ENCODE measurements at regions of chr11 and their contacts with region 1.

Region 1: DNA sequence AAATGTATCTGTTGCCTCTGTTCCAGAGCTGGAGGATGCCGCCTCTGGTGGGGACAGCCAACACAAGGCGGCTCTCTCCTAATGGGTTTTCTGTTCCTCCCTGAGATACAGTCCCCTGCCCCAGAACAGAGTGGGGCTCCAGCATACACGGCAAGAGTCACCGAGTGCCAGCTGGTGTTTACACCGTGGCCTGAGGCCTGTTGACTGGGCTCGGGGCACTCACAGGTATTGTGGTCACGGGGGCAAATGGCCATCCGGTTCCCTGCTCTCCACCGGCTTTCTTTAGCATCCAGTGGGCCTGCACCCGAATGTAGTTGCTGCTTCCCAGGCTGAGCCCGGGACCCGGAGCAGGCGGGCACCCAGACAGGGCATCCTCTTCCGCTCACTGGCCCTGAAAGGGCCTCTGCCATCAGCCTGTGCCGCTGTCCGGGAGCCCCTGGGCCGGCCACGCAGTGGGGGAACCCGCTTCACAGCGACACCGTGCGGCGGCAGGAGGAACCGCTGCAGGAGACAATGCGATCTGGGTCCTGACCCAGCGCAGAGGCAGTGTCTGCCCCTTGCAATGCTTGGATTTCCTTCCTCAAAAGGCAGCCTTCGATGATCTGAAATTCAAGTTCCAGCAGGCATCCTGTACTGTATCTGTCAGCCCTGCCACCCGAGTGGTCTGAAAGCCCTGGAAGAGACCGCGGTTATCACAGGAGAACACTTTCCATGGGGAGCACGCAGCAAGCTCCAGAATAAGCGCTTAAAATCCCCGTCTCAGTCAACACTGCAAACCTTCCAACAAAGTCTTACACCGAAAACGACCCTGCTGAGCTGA is 859 bp upstream of the KRTAP5-5 start:
- DNase-seq: peak; percentile 66
- ATAC-seq: peak; percentile 90
- H3K4me3 Mint-ChIP-seq: no peak overlapping the region
- H3K27ac Mint-ChIP-seq: no peak overlapping the region
- H3K4me1 Mint-ChIP-seq: peaks cover 6% of the 10 kb centered on the region
- H3K27me3 Mint-ChIP-seq: peaks cover 28% of the 10 kb centered on the region

Region 2: DNA sequence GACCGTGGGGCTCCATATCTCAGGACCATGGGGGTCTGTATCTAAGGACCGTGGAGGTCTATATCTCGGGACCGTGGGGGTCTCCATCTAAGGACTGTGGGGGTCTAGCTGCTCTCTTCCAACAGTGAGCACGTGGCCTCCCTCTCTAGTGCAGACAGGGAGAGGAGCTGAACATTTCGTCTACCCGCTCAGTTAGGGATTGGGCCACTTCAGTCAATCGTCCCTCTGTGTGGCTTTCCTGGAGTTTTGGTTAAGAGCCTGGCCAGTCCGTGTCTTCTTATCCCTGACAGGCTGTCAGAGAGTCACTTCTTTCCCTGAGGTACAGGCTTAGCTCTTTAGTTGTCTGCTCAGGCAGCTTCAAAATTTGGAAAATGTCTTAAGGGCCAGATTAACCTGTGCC is 46.7 kb before region 1 on chr11:
- CTCF ChIA-PET with region 1: no interaction called
- DNase-seq: no peak
- ATAC-seq: no peak
- H3K4me3 Mint-ChIP-seq: no peak overlapping the region
- H3K27ac Mint-ChIP-seq: no peak overlapping the region
- H3K4me1 Mint-ChIP-seq: no peaks in the 10 kb centered on the region
- H3K27me3 Mint-ChIP-seq: peaks cover 10% of the 10 kb centered on the region

Region 3: DNA sequence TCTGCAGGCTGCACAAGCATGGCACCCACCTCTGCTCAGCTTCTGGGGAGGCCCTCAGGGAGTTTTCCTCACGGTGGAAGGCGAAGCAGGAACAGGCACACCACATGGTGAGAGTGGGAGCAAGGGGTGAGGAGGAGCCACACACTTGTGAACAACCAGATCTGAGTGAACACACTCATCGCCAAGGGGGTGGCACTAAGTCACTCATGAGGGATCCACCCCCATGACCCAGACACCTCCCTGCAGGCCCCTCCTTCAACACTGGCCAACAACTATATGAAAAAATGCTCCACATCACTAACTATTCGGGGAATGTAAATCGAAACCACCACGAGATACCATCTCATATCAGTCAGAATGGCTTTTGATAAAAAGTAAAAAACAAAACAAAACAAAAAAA is 29.9 kb before region 1 on chr11:
- CTCF ChIA-PET with region 1: interaction called, 13 read pairs
- DNase-seq: no peak
- ATAC-seq: no peak
- H3K4me3 Mint-ChIP-seq: no peak overlapping the region
- H3K27ac Mint-ChIP-seq: no peak overlapping the region
- H3K4me1 Mint-ChIP-seq: peaks cover 2% of the 10 kb centered on the region
- H3K27me3 Mint-ChIP-seq: peaks cover 81% of the 10 kb centered on the region

Region 4: GRCh38 chr11:1701091-1701807 is 72.5 kb after region 1 on chr11:
- CTCF ChIA-PET with region 1: no interaction called
- DNase-seq: peak; percentile 61
- ATAC-seq: peak; percentile 66
- H3K4me3 Mint-ChIP-seq: no peak overlapping the region
- H3K27ac Mint-ChIP-seq: peak overlapping the region; percentile 59
- H3K4me1 Mint-ChIP-seq: peaks cover 42% of the 10 kb centered on the region
- H3K27me3 Mint-ChIP-seq: peaks cover 26% of the 10 kb centered on the region

Measured in activated CD8-positive, alpha-beta memory T cell treated with anti-CD3 and anti-CD28 coated beads, Interleukin-2, amount 10 ng/mL, durations not matched to agents 7 days and 5 days (primary cell).